ENCODE measurements at regions of chr3 and their contacts with region 1.

Region 1: GRCh38 chr3:14234251-14235002 is 55.8 kb downstream of the LSM3 start:
- DNase-seq: peak; percentile 73

Region 2: DNA sequence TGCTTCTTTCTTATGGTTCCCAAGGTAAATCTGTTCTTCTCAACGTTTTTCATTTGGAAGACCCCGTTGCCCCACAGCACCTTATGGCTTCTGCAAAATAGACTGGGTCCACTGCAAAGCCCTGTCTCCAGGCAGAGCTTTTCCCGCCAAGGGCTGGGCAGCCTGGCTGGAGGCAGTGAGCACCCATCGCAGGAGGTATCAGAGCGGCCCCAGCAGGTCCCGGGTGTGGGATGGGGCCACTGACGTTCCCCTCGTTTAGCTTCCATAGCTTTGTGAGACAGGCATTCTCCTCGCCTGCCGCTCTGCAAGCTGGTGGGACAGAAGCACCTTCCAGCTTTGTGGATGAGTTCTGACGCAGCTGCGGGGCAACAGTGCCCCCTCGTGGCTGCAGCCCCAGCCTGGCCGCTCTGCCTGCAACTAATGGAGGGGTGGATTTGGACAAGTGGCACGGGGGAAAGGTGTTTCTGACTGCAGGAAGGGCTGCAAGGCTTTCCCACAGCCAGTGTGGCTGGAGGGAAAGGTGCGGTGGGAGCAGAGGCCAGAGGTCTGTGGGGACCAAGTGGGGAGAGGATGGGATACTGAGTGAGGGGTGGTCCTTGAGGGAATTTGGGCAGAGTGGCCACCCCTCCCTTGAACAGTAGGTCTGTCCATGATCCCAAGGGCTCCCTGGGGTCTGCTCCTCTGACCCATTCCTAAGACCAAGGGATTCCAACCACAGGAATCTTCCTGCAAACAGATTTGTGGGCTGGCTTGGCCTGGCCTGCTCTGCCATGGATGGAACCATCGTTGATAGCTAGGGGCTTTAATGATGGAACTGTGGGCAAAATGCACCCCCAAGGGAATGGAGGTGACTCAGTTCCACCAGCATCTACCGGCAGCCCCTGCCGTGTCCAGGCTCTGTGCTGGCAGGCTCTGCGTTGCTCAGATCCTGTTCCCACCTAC is 586.1 kb before region 1 on chr3:
- intact Hi-C with region 1: no loop called
- DNase-seq: peak; percentile 86

Region 3: DNA sequence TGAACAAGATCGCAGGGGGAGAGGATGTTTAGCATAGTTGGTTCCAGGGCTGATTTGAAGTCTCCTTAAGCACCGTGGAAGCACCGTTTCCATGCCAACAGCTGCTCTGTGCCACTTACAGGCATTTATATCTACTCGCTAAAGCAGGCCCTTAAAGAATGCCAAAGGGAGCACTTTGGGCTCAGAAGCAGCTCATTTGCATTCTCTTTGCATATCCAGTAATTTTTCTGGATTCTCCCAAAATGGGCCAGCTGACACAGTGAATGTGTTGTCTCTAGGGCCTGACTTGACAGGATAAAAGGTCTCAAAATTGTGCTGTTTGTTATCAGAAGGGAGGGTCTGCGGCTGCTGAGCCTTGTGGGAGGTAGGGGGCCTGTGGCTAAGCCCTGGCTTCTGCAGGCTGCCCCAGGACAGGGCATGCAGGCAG is 546.9 kb before region 1 on chr3:
- intact Hi-C with region 1: no loop called
- DNase-seq: no peak

Region 4: GRCh38 chr3:14297784-14298236 is 63.4 kb after region 1 on chr3:
- intact Hi-C with region 1: loop called (anchors 2 kb)
- DNase-seq: no peak

Region 5: GRCh38 chr3:14312371-14312770 is 77.9 kb after region 1 on chr3:
- intact Hi-C with region 1: no loop called
- DNase-seq: no peak